Activated CD4-positive, alpha-beta T cell treated with anti-CD3 and anti-CD28 coated beads for 36 hours (primary cell): ENCODE measurements at regions of chr3 and their contacts with region 1.

Region 1: DNA sequence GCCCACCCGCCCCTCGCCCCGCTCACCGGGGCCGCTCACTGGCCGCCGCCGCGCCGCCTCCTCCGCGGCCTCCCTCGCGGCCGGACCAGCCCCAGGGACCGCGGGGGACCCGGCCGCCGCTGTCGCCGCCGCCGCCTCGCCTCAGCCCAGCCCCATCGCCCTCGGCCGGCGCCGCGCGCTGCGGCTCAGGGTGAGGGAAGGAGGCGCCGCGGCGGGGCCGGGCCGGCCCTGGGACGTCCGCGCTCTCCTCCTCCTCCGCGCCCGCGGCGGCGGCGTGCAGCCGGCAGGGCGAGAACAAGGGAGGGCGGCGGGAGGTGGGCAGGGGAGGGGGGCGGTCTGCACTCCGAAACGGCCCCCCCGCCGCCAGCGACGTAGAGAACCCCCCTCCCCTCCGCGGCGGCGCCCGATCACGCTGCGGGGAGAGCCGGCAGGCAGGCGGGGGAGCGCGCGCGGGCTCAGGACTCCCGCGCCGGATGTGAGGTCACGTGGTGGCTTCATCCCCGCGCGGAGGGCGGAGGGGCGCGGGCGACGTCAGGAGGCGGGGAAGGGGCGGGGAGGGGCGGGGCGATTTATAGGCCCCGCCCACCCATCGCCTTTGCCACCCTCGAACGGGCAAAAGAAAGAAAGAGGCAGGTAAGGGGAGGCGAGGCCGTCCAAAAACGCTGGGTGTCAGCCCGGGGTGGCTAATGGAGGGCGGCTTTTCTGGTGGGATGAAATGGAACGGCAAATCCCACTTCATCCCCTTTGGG is at the start of gene ATP13A3:
- DNase-seq: peak; percentile 94
- ATAC-seq: peak; percentile 75
- H3K4me3 Mint-ChIP-seq: peak within 1 kb of the TSS; percentile 95
- H3K27ac Mint-ChIP-seq: peak within 1 kb of the TSS; percentile 93
- H3K4me1 Mint-ChIP-seq: peaks cover 54% of the 10 kb centered on the region
- H3K27me3 Mint-ChIP-seq: peaks cover 2% of the 10 kb centered on the region
- total RNA-seq, gene ATP13A3: 61.4 to 107 TPM

Region 2: GRCh38 chr3:194070634-194071409 is 415.9 kb before region 1 on chr3:
- CTCF ChIA-PET with region 1: no interaction called
- POLR2A ChIA-PET with region 1: no interaction called
- intact Hi-C with region 1: loop called in 1 of 2 experiments (anchors 5 kb)
- DNase-seq: peak; percentile 87
- ATAC-seq: peak; percentile 82
- H3K4me3 Mint-ChIP-seq: peak overlapping the region; percentile 55
- H3K27ac Mint-ChIP-seq: peak overlapping the region; percentile 10
- H3K4me1 Mint-ChIP-seq: peaks cover 24% of the 10 kb centered on the region
- H3K27me3 Mint-ChIP-seq: peaks cover 34% of the 10 kb centered on the region

Region 3: GRCh38 chr3:194521514-194522260 is 35.0 kb after region 1 on chr3:
- CTCF ChIA-PET with region 1: interaction called, 4 read pairs
- POLR2A ChIA-PET with region 1: no interaction called
- intact Hi-C with region 1: loop called (anchors 1 to 2 kb)
- DNase-seq: no peak
- ATAC-seq: no peak
- H3K4me3 Mint-ChIP-seq: no peak overlapping the region
- H3K27ac Mint-ChIP-seq: no peak overlapping the region
- H3K4me1 Mint-ChIP-seq: peaks cover 37% of the 10 kb centered on the region
- H3K27me3 Mint-ChIP-seq: peaks cover 27% of the 10 kb centered on the region

Region 4: GRCh38 chr3:194632809-194633348 is 146.2 kb after region 1 on chr3:
- CTCF ChIA-PET with region 1: interaction called, 4 read pairs
- POLR2A ChIA-PET with region 1: no interaction called
- intact Hi-C with region 1: loop called in 1 of 2 experiments (anchors 1 kb)
- DNase-seq: peak; percentile 19
- ATAC-seq: peak; percentile 76
- H3K4me3 Mint-ChIP-seq: peak overlapping the region; percentile 74
- H3K27ac Mint-ChIP-seq: no peak overlapping the region
- H3K4me1 Mint-ChIP-seq: peaks cover 5% of the 10 kb centered on the region
- H3K27me3 Mint-ChIP-seq: no peaks in the 10 kb centered on the region

Region 5: GRCh38 chr3:195106418-195106906 is 619.7 kb after region 1 on chr3:
- CTCF ChIA-PET with region 1: no interaction called
- POLR2A ChIA-PET with region 1: no interaction called
- intact Hi-C with region 1: no loop called
- DNase-seq: peak; percentile 80
- ATAC-seq: peak; percentile 85
- H3K4me3 Mint-ChIP-seq: peak overlapping the region; percentile 9
- H3K27ac Mint-ChIP-seq: peak overlapping the region; percentile 55
- H3K4me1 Mint-ChIP-seq: peaks cover 4% of the 10 kb centered on the region
- H3K27me3 Mint-ChIP-seq: no peaks in the 10 kb centered on the region

Region 6: DNA sequence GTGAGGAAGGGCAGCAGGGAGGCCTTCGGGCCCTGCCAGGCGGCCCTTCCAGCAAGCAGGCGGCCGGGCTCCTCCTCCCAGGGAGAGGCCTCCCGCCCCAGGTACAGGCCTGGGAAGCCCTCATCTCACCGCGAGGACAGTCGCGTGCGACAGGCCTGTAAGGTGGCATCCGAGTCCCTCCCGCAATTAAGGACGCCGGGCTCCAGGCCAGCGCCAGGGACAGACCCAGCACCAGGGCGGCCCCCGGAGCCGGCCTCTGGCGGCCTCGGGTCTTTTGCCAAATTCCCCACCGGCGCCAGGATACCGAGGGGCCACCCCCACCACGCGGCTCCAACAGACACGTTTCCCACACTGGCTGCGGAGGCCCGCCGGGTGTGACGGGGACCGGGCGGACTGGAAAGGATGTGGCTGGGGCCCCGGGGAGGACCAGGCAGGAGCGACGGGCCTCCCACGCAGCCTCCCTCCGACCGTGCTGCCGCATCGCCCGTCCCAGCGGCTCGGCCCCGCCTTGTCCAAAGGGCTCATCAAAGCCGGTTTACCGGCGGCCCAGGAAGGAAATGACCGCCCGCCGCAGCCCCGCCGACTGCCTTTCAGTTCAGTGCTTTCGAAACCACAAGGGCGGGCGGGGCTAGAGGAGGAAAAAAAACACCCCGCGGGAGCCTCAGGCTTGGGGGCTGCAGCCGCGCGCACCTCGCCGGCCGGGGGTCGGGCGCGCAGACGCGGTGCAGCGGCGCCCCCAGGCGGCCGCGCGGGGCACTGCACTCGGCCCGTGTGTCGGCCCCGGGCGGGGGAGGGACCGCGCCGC is 773.0 kb after region 1 on chr3:
- CTCF ChIA-PET with region 1: no interaction called
- POLR2A ChIA-PET with region 1: no interaction called
- intact Hi-C with region 1: loop called in 1 of 2 experiments (anchors 2 kb)
- DNase-seq: peak; percentile 90
- ATAC-seq: peak; percentile 81
- H3K4me3 Mint-ChIP-seq: peak overlapping the region; percentile 30
- H3K27ac Mint-ChIP-seq: no peak overlapping the region
- H3K4me1 Mint-ChIP-seq: peaks cover 15% of the 10 kb centered on the region
- H3K27me3 Mint-ChIP-seq: no peaks in the 10 kb centered on the region

Region 7: DNA sequence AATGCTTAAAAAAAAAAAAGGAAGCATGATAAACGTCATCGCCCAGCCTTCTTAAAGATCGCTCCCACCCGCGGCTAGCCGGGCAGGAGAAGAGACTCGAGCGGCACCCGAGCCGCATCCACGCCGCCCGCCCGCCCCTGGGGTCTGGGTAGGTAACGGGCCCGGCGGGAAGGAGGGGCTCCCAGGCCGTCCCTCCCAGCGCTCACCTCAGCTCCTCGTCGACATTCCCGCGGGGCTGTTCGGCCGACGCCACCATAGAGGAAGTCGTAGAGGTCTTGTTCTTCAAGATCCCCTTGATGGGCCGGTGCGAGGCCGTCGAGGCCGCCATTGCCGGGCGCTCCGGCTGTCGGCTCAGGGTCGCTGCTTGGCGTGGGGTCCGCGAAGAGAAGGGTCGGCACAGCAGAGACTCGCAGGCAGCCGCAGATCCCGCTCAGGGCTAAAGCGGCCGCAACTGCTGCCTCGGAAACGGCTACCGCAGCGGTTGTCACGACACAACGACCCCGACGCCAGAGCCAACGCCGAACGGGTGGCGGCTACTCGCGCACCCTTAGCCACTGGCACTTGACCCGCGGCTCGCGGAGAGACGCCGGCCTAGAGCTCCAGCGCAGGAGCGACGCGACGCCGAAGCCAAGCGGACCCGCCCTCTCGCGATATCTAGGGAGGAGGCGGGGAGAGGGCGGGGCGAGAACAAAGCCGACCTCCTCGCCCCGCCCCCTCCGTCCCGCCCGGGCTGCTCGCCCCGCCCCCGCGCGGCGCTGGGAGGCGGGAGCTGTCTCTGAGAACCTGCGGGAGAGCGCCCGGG is 1056.2 kb after region 1 on chr3 and contains the start of gene PPP1R2:
- CTCF ChIA-PET with region 1: no interaction called
- POLR2A ChIA-PET with region 1: no interaction called
- intact Hi-C with region 1: loop called in 1 of 2 experiments (anchors 1 kb)
- DNase-seq: peak; percentile 97
- ATAC-seq: peak; percentile 72
- H3K4me3 Mint-ChIP-seq: peak within 1 kb of the TSS; percentile 95
- H3K27ac Mint-ChIP-seq: peak within 1 kb of the TSS; percentile 95
- H3K4me1 Mint-ChIP-seq: peaks cover 65% of the 10 kb centered on the region
- H3K27me3 Mint-ChIP-seq: no peaks in the 10 kb centered on the region
- total RNA-seq, gene PPP1R2: 77.0 to 134 TPM